ENCODE measurements at regions of chrX and their contacts with region 1.

Region 1: GRCh38 chrX:70998411-70999027 is 67.6 kb upstream of the SLC7A3 start:
- DNase-seq: no peak
- H3K4me3 ChIP-seq: no peak overlapping the region
- H3K27ac ChIP-seq: no peak overlapping the region
- H3K4me1 ChIP-seq: no peaks in the 10 kb centered on the region
- H3K27me3 ChIP-seq: no peaks in the 10 kb centered on the region
- CTCF ChIP-seq: peak in 1 of 3 experiments; percentile 28
- EP300 ChIP-seq: no peak
- POLR2A ChIP-seq: no peak

Region 2: DNA sequence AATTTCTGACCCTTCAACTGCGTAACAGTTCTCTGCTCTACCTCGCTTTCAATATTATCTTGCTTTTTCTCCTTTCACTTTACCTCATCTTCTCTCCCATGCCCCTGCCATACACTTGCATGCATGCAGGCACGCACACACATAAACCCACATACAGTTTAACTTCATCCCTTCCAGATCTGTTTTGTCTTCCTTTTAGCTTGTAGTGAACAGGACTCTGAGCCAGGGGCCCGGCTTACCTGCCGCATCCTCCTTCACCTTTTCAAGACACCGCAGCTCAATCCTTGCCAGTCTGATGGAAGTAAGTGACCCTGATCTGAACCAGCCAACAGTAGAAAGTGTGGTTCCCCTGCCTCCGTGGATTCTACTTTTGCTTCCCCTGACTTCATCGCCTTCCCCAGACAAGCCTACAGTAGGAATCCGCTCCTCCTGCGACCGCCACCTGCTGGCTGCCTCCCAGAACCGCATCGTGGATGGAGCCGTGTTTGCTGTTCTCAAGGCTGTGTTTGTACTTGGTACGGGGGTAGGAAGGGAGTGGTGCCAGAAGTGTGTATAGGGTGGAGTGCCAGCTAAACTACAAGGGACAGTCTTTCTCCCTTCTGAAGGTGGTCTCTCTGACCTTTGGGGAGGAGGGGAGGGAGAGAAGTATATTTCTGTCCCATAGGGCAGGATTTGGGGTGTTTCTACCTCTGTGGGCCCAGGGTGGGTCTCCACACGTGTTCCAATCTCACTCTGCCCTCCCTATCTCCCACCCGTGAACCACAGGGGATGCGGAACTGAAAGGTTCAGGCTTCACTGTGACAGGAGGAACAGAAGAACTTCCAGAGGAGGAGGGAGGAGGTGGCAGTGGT is 130.6 kb after region 1 on chrX:
- intact Hi-C with region 1: loop called (anchors 10 kb)
- DNase-seq: no peak
- H3K4me3 ChIP-seq: no peak overlapping the region
- H3K27ac ChIP-seq: no peak overlapping the region
- H3K4me1 ChIP-seq: peaks cover 0 to 8% (median 2%) of the 10 kb centered on the region in 4 donors
- H3K27me3 ChIP-seq: no peaks in the 10 kb centered on the region
- CTCF ChIP-seq: peak; percentile 57 to 70 (median 59)
- EP300 ChIP-seq: no peak
- POLR2A ChIP-seq: no peak

Region 3: DNA sequence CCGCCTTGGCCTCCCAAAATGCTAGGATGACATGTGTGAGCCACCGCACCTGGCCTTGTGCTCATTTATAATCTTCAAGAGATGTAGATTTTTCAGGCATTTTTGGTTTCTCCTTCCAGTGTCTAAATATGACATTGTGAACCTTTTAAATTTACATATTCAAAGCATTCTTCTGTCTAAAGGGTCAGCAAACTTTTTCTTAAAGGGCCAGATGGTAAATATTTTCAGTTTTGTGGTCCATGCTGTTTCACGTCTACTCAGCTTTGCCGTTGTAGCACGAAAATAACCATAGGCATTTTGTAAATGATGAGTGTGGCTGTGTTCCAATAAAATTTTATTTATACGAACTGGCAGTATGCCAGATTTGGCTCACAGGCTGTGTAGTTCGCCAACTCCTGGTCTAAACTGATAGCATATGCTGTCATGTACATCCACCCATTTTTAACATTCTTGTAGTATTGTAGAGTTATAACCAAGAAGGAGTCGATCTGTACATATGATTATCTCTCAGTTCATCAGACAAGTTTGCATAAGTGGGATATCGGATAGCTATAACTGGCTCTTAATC is 567.0 kb after region 1 on chrX:
- intact Hi-C with region 1: no loop called
- DNase-seq: no peak
- H3K4me3 ChIP-seq: no peak overlapping the region
- H3K27ac ChIP-seq: peak overlapping the region in 1 of 4 donors; percentile 10
- H3K4me1 ChIP-seq: peaks cover 0 to 7% (median 6%) of the 10 kb centered on the region in 4 donors
- H3K27me3 ChIP-seq: no peaks in the 10 kb centered on the region
- CTCF ChIP-seq: no peak
- EP300 ChIP-seq: no peak
- POLR2A ChIP-seq: no peak

Measured in esophagus muscularis mucosa (tissue), 4 donors.